H1 (cell line): ENCODE measurements at regions of chr5 and their contacts with region 1.

Region 1: GRCh38 chr5:4941957-4942830 is 197.9 kb upstream of the ADAMTS16 start:
- DNase-seq: peak in 1 of 2 experiments; percentile 90
- H3K4me3 ChIP-seq: no peak overlapping the region
- H3K27ac ChIP-seq: no peak overlapping the region
- H3K4me1 ChIP-seq: peaks cover 0 to 5% (median 4%) of the 10 kb centered on the region in 4 experiments; a peak in 5 of 7 replicates
- H3K27me3 ChIP-seq: no peaks in the 10 kb centered on the region
- CTCF ChIP-seq: peak; percentile 72 to 91 (median 87)
- EP300 ChIP-seq: no peak
- POLR2A ChIP-seq: no peak
- RAD21 ChIP-seq: peak; percentile 70 to 80

Region 2: DNA sequence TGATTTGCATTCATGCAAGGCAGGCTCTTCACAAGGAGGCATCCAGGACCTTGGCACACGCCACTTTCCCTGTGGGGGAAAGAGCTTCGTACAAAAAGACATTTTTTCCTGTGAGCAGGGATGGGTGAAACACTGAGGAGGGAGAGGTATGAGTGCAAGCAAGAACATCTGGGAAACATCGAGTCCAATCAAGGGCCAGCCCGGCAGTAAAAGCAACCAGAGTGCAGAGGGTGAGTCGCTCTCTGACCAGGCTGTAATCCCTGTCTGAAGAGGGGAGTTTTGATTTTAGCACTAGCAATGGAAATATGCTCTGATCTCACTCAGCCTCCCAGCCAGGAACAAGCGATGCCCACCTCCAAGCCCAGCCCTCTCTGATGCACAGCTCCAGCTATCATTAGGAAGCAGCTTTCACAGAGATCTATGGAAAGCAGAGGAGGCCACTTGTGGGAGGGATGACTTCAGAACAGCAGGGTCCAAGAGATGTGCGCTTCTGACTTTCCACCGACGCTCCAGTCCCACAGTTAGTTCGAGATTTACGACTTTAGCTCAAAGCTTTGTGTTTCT is 13.0 kb before region 1 on chr5:
- CTCF ChIA-PET with region 1: interaction called, 30 read pairs
- POLR2A ChIA-PET with region 1: interaction called, 3 read pairs
- DNase-seq: no peak
- H3K4me3 ChIP-seq: no peak overlapping the region
- H3K27ac ChIP-seq: no peak overlapping the region
- H3K4me1 ChIP-seq: no peaks in the 10 kb centered on the region; a peak in 1 of 7 replicates
- H3K27me3 ChIP-seq: no peaks in the 10 kb centered on the region
- CTCF ChIP-seq: no peak
- EP300 ChIP-seq: no peak
- POLR2A ChIP-seq: no peak
- RAD21 ChIP-seq: no peak

Region 3: DNA sequence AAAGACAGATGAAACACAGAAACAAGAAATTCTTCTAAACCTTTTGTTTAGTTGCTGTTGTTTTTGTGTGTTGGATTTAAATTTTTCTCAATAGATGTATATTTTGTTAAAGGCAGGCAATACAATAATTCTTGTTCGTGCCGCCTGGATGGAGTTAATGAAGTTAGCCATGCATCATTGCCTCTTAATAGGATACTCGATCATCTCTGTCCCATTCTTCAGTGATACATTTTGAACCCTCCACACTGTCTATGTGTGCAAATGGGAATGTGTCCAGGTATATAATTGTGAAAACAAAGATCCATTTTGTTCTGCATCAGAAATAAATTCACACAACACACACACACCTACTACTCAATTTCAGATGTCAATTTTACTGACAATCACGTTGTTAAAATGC is 11.4 kb after region 1 on chr5:
- CTCF ChIA-PET with region 1: interaction called, 18 read pairs
- POLR2A ChIA-PET with region 1: no interaction called
- DNase-seq: no peak
- H3K4me3 ChIP-seq: no peak overlapping the region
- H3K27ac ChIP-seq: no peak overlapping the region
- H3K4me1 ChIP-seq: no peaks in the 10 kb centered on the region
- H3K27me3 ChIP-seq: no peaks in the 10 kb centered on the region
- CTCF ChIP-seq: no peak
- EP300 ChIP-seq: no peak
- POLR2A ChIP-seq: no peak
- RAD21 ChIP-seq: no peak

Region 4: DNA sequence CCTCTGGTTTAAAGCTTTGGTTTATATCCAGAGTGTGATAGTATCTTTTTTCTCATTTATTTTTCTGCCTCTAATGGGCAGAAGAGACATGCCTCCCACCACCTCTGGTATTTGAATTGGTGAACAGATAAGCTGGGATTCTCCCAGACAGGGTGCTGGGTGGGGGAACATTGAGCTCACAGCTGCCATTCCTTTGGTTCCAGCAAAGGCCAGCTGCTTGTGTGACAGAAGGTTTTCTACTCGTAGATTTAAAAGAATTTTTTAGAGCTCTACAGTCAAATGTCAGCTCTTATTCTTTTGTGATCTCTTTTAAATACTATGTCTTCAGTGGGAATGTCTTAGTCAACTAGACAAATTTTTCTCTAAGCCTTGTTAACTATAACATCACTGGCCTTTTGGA is 143.2 kb after region 1 on chr5:
- CTCF ChIA-PET with region 1: no interaction called
- POLR2A ChIA-PET with region 1: no interaction called
- DNase-seq: no peak
- H3K4me3 ChIP-seq: no peak overlapping the region
- H3K27ac ChIP-seq: no peak overlapping the region
- H3K4me1 ChIP-seq: peaks cover 0 to 6% (median 2%) of the 10 kb centered on the region in 4 experiments; a peak in 3 of 7 replicates
- H3K27me3 ChIP-seq: no peaks in the 10 kb centered on the region
- CTCF ChIP-seq: no peak
- EP300 ChIP-seq: no peak
- POLR2A ChIP-seq: no peak
- RAD21 ChIP-seq: no peak